Activated CD4-positive, alpha-beta T cell treated with anti-CD3 and anti-CD28 coated beads for 36 hours (primary cell): ENCODE measurements at regions of chr1 and their contacts with region 1.

Region 1: GRCh38 chr1:42456010-42456758 is at the starts of genes PPCS and ZMYND12:
- DNase-seq: peak; percentile 97
- ATAC-seq: peak; percentile 92
- H3K4me3 Mint-ChIP-seq: peak within 1 kb of the TSS; percentile 80
- H3K27ac Mint-ChIP-seq: peak within 1 kb of the TSS; percentile 99
- H3K4me1 Mint-ChIP-seq: peaks cover 27% of the 10 kb centered on the region
- H3K27me3 Mint-ChIP-seq: no peaks in the 10 kb centered on the region
- total RNA-seq, gene PPCS: 47.3 to 47.6 TPM
- total RNA-seq, gene ZMYND12: 0.64 to 1.6 TPM

Region 2: GRCh38 chr1:41360993-41361753 is 1095.0 kb before region 1 on chr1 and contains the start of gene FOXO6:
- CTCF ChIA-PET with region 1: no interaction called
- POLR2A ChIA-PET with region 1: no interaction called
- intact Hi-C with region 1: loop called in 1 of 2 experiments (anchors 10 kb)
- DNase-seq: peak; percentile 96
- ATAC-seq: peak; percentile 96
- H3K4me3 Mint-ChIP-seq: peak within 1 kb of the TSS; percentile 49
- H3K27ac Mint-ChIP-seq: no peak within 1 kb of the TSS
- H3K4me1 Mint-ChIP-seq: peaks cover 10% of the 10 kb centered on the region
- H3K27me3 Mint-ChIP-seq: peaks cover 24% of the 10 kb centered on the region
- total RNA-seq, gene FOXO6: 0.09 TPM in 1 of 2 experiments, not detected in the other

Region 3: GRCh38 chr1:41980827-41981653 is 475.1 kb before region 1 on chr1:
- CTCF ChIA-PET with region 1: no interaction called
- POLR2A ChIA-PET with region 1: no interaction called
- intact Hi-C with region 1: no loop called
- DNase-seq: peak; percentile 19
- ATAC-seq: peak; percentile 79
- H3K4me3 Mint-ChIP-seq: no peak overlapping the region
- H3K27ac Mint-ChIP-seq: no peak overlapping the region
- H3K4me1 Mint-ChIP-seq: peaks cover 25% of the 10 kb centered on the region
- H3K27me3 Mint-ChIP-seq: no peaks in the 10 kb centered on the region

Region 4: DNA sequence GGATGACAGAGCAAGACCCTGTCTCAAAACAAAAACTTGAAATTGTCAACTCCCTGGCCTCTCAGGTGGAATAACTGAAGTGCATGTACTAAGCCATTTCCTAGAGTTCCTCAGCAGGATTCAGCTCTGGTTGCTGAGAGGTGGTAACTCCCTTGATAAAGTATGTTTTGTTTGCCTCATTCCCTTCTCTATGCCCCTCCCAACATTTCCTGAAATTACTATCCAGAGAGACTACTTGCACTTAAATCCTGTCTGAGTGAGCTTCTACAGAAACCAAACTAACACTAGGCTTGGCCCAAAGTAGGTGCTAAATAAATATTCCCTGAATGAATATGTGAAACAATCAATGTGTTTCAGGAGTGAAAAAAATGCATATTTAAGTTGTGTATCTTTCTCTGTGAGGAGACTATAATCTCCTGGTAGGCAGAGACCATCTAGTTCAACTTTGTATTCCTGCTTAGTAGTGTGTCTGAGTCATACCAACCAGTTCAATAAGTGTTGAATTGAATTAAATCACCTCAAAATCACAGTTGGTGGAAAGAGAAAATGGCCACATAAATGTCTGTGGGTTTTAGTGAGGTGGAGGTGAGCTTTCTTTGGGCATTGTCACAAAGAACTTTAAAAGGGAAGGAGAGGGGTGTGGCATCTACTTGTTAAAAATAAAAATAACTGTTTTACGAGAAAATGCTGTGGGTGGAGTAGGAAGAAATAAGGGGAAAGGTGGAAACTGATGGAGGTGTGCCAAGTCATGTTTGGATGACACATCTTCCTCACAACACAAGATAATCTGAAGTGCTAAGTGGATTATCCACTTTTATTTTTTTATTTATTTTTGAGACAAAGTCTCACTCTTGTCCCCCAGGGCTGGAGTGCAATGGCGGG is 63.0 kb before region 1 on chr1:
- CTCF ChIA-PET with region 1: no interaction called
- POLR2A ChIA-PET with region 1: no interaction called
- intact Hi-C with region 1: loop called in 1 of 2 experiments (anchors 2 kb)
- DNase-seq: peak; percentile 7
- ATAC-seq: peak; percentile 90
- H3K4me3 Mint-ChIP-seq: no peak overlapping the region
- H3K27ac Mint-ChIP-seq: no peak overlapping the region
- H3K4me1 Mint-ChIP-seq: peaks cover 11% of the 10 kb centered on the region
- H3K27me3 Mint-ChIP-seq: peaks cover 3% of the 10 kb centered on the region

Region 5: GRCh38 chr1:42681741-42682483 is 225.7 kb after region 1 on chr1 and contains the start of gene YBX1:
- CTCF ChIA-PET with region 1: no interaction called
- POLR2A ChIA-PET with region 1: interaction called, 4 read pairs
- intact Hi-C with region 1: loop called (anchors 1 kb)
- DNase-seq: peak; percentile 96
- ATAC-seq: peak; percentile 97
- H3K4me3 Mint-ChIP-seq: peak within 1 kb of the TSS; percentile 93
- H3K27ac Mint-ChIP-seq: peak within 1 kb of the TSS; percentile 97
- H3K4me1 Mint-ChIP-seq: peaks cover 41% of the 10 kb centered on the region
- H3K27me3 Mint-ChIP-seq: no peaks in the 10 kb centered on the region
- total RNA-seq, gene YBX1: 1,224 to 1,435 TPM

Region 6: DNA sequence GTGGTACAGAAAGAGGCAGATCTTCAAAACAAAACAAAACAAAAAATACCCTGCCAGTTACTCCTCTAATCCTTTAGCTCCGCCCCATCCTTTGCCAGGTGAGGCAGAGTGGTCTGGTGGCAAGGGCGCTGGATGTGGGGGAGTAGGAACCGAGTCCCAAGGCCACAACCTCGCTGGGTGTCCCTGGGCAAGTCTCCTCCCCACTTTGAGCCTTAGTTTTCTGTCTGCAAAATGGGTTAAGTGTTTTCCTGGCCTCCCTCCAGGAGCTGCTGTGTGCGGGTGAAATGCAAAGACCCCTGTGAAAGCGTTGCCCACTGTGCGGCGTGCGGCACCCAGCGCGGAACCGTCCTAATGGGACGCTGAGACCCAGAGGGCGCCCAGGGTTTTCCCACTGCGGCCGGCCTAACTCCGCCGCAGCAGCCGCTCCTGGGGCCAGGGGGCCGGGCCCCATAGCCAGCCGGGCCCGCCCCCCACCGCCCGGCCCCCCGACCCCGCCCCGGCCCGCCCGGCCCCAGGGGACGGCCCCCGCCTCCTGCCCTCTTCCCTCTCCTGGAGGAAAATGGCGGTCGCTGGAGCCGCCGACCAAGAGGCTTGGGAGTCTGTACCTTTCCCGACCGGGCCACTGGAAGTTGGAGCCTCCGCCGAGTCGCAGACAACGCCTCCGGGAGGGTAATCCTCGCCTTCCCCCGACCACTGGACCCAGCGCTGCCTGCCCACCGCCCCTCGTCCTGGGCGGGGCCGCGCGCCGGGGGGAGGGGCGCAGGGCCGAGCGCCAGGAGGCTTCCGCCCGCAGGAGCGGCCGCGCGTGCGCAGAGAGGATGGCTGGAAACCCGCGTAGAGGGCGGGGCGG is 360.6 kb after region 1 on chr1 and contains the starts of genes ERMAP and SVBP:
- CTCF ChIA-PET with region 1: no interaction called
- POLR2A ChIA-PET with region 1: no interaction called
- intact Hi-C with region 1: loop called in 1 of 2 experiments (anchors 1 kb)
- DNase-seq: peak; percentile 98
- ATAC-seq: peak; percentile 90
- H3K4me3 Mint-ChIP-seq: peak within 1 kb of the TSS; percentile 77
- H3K27ac Mint-ChIP-seq: peak within 1 kb of the TSS; percentile 84
- H3K4me1 Mint-ChIP-seq: peaks cover 16% of the 10 kb centered on the region
- H3K27me3 Mint-ChIP-seq: peaks cover 2% of the 10 kb centered on the region
- total RNA-seq, gene ERMAP: 4.5 to 6.4 TPM
- total RNA-seq, gene SVBP: 14.5 to 14.6 TPM

Region 7: DNA sequence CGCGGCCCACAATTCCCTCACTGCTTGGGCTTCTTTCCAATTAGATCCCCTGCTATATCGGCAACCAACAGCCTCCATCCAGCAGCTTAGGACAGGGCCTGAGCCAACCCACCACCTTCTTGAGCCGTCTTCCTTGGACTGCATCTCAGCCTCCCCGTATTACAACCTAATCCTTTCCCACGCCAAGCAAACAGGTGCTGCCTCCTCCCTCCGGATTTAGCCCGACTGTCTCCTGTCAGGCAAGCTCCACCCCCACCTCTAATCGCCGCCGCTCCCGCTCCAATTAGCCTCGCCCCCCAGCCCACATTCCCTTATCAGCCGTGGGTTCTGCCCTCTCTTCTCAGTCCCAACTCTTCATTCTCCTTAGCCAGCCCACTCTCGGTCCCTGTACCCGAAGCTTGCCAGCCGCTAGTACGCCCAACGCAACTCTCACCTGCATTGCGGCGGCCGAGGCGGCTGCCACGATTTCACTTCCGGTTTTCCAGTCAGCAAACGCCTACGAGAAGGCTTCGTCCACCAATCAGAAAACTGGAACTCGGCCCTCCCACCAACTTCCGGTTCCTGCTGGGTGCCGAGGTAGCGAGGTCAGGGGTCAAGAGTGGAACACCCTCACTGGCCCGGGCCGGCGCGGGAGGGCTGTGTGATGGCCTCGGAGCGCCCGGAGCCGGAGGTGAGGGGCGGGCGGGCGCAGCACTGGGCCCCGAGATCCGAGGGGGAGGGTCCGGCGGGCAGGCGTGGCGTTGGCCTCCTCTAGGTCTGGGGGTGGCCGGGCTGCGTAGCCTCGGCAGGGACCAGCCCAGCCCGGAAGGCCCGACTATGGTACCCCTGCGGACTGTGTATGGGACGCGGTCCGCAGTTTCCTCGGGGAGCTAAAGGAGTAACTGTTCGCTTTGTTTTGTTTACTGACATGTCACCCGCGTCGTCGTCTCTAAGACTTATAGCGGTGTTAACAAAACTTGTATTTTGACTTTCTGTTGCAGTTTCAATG is 933.4 kb after region 1 on chr1 and contains the starts of genes MED8 and SZT2:
- CTCF ChIA-PET with region 1: no interaction called
- POLR2A ChIA-PET with region 1: no interaction called
- intact Hi-C with region 1: loop called in 1 of 2 experiments (anchors 10 kb)
- DNase-seq: peak; percentile 94
- ATAC-seq: peak; percentile 93
- H3K4me3 Mint-ChIP-seq: peak within 1 kb of the TSS; percentile 99
- H3K27ac Mint-ChIP-seq: peak within 1 kb of the TSS; percentile 97
- H3K4me1 Mint-ChIP-seq: peaks cover 39% of the 10 kb centered on the region
- H3K27me3 Mint-ChIP-seq: no peaks in the 10 kb centered on the region
- total RNA-seq, gene MED8: 32.3 to 36.6 TPM
- total RNA-seq, gene SZT2: 33.6 to 36.3 TPM